WTC11 (cell line): ENCODE measurements at regions of chr7 and their contacts with region 1.

Region 1: DNA sequence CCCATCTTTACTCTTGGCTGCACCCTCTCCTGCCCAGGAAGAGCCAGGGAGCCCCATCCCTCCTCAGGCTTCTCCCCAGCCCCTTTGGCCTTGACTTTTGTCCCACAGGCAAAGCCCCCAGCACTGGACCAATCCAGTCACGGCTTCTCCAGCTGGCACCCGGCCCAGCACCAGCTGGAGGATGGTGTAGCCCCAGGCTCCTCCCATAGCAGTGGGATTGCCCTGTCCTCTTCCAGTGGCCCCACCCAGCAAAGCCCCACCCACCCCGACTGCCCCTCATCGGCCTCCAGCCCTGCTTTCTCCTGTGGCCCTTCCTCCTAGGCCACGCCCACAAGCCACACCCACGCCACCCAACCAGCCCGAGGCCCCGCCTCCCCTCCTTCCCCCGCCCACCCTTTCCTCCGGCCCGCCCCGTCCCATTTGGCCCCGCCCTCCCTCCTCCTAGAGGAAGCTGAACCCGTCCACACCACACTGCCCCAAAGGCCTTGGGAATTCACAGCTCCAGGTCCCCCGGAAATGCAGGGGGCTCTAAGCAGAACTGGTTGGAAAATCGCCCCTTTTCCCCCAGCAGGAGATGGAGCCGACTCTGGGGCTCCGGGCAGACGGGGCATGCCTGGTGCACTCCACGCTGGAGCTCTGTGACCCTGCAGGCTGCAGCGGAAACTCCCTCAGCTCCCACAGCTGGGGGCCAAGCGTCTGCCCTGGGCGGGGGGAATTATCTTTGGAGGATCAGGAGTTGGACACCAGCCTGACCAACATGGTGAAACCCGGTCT is 25.2 kb downstream of the GET4 start:
- DNase-seq: peak; percentile 95
- ATAC-seq: peak; percentile 94
- H3K4me3 Mint-ChIP-seq: no peak overlapping the region
- H3K27ac Mint-ChIP-seq: no peak overlapping the region
- H3K4me1 Mint-ChIP-seq: no peaks in the 10 kb centered on the region
- H3K27me3 Mint-ChIP-seq: peaks cover 17% of the 10 kb centered on the region
- CTCF ChIP-seq: no peak

Region 2: DNA sequence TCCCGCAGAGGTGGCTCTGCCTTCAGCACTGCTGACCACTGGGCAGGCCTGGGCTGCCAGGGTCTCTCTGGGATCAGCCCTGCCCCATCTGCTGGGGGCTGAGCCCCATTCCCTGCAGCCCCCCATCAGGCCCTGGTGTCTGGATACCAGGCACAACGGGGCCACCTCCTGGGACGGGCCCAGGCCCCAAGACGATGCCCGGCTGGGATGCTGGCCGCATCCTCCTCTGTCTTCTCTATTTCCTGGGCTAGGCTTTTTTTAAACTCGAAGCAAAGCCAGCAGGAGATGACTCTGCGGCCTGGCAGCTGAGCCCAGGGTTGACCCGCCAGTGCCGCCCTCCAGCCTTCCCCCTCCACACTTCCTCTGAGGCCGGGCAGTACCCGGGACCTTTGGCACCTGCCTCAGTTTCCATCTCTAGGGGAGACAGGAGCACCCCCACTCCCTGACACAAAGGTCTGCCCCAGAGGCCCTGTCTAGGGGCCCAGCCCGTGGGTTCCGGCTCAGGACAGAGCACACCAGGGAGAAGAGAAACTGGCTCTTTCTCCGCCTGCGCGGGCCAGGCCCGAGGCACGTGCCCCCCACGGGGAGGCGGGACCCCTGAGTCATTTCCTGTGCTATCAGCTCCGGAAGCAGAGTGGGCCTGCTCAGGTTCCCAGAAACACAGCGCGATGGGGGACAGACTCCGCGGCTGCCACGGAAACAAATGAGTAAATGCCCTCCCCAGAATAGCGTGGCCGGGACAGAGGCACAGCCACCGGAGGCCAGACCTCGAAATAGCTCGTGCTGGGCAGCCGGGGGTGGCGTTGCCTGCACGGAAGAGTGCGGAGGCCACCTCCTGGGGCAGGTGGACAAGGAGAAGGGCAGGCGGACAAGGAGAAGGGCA is 297.3 kb before region 1 on chr7:
- CTCF ChIA-PET with region 1: no interaction called
- POLR2A ChIA-PET with region 1: no interaction called
- DNase-seq: no peak
- ATAC-seq: no peak
- H3K4me3 Mint-ChIP-seq: no peak overlapping the region
- H3K27ac Mint-ChIP-seq: no peak overlapping the region
- H3K4me1 Mint-ChIP-seq: peaks cover 4% of the 10 kb centered on the region; the same call in 1 of the 2 replicates
- H3K27me3 Mint-ChIP-seq: no peaks in the 10 kb centered on the region
- CTCF ChIP-seq: no peak

Region 3: GRCh38 chr7:957418-958220 is 56.1 kb after region 1 on chr7:
- CTCF ChIA-PET with region 1: interaction called, 10 read pairs
- POLR2A ChIA-PET with region 1: no interaction called
- DNase-seq: peak; percentile 42
- ATAC-seq: peak; percentile 32
- H3K4me3 Mint-ChIP-seq: no peak overlapping the region
- H3K27ac Mint-ChIP-seq: no peak overlapping the region
- H3K4me1 Mint-ChIP-seq: no peaks in the 10 kb centered on the region
- H3K27me3 Mint-ChIP-seq: peaks cover 12% of the 10 kb centered on the region
- CTCF ChIP-seq: no peak